ENCODE measurements at regions of chr16 and their contacts with region 1.

Region 1: DNA sequence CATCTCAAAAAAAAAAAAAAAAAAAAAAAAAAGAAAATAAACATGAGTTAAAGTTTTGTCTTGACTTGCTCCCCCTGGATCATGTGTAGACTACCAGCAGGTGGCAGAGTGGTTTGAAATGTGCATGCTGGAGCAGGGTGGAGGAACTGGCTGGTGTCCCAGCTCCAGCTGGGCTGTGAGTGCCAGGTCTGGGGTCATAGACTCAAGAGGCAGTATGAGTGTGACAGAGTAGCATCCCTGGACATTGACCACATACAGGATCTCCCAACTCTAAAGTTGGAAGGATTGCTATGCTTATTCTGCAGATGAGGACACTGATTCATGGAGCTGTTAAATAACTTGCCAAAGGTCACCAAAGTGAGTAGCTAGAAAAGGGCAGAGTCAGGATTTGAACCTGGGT is 198.0 kb upstream of the MPHOSPH6 start:
- DNase-seq: peak in 7 of 10 donors; percentile 31 to 93 (median 52)

Region 2: GRCh38 chr16:82425661-82426060 is 57.6 kb after region 1 on chr16:
- intact Hi-C with region 1: no loop called
- DNase-seq: no peak

Region 3: GRCh38 chr16:82456683-82457082 is 88.6 kb after region 1 on chr16:
- intact Hi-C with region 1: loop called (anchors 10 kb)
- DNase-seq: peak; percentile 16 to 91 (median 54)

Measured in posterior cingulate gyrus (tissue), 11 donors.